Panc1 (cell line): ENCODE measurements at regions of chr2 and their contacts with region 1.

Region 1: GRCh38 chr2:134758633-134759032 is 39.8 kb upstream of the TMEM163 start:
- DNase-seq: no peak
- ATAC-seq: no peak
- H3K4me3 ChIP-seq: no peak overlapping the region
- H3K27ac ChIP-seq: no peak overlapping the region
- H3K4me1 ChIP-seq: no peaks in the 10 kb centered on the region
- H3K27me3 ChIP-seq: no peaks in the 10 kb centered on the region; the same call in 1 of the 2 replicates
- CTCF ChIP-seq: no peak

Region 2: GRCh38 chr2:134745023-134745422 is 13.6 kb before region 1 on chr2:
- CTCF ChIA-PET with region 1: interaction called, 12 read pairs
- POLR2A ChIA-PET with region 1: no interaction called
- in situ Hi-C with region 1: no loop called
- intact Hi-C with region 1: no loop called
- DNase-seq: no peak
- ATAC-seq: no peak
- H3K4me3 ChIP-seq: no peak overlapping the region
- H3K27ac ChIP-seq: no peak overlapping the region
- H3K4me1 ChIP-seq: no peaks in the 10 kb centered on the region
- H3K27me3 ChIP-seq: no peaks in the 10 kb centered on the region
- CTCF ChIP-seq: no peak